ENCODE measurements at regions of chr13 and their contacts with region 1.

Region 1: GRCh38 chr13:19959831-19960652 is 1.5 kb downstream of the ZMYM2 start:
- DNase-seq: peak; percentile 93
- H3K4me3 Mint-ChIP-seq: peak overlapping the region; percentile 94
- H3K27ac Mint-ChIP-seq: peak overlapping the region; percentile 96
- H3K4me1 Mint-ChIP-seq: peaks cover 34% of the 10 kb centered on the region
- H3K27me3 Mint-ChIP-seq: no peaks in the 10 kb centered on the region

Region 2: GRCh38 chr13:19153782-19154450 is 806.1 kb before region 1 on chr13:
- CTCF ChIA-PET with region 1: no interaction called
- POLR2A ChIA-PET with region 1: no interaction called
- intact Hi-C with region 1: no loop called
- DNase-seq: peak; percentile 33
- H3K4me3 Mint-ChIP-seq: no peak overlapping the region
- H3K27ac Mint-ChIP-seq: no peak overlapping the region
- H3K4me1 Mint-ChIP-seq: no peaks in the 10 kb centered on the region
- H3K27me3 Mint-ChIP-seq: no peaks in the 10 kb centered on the region

Region 3: GRCh38 chr13:19633479-19634255 is 326.4 kb before region 1 on chr13 and contains the start of gene MPHOSPH8:
- CTCF ChIA-PET with region 1: no interaction called
- POLR2A ChIA-PET with region 1: no interaction called
- intact Hi-C with region 1: loop called (anchors 1 kb)
- DNase-seq: peak; percentile 96
- H3K4me3 Mint-ChIP-seq: peak within 1 kb of the TSS; percentile 100
- H3K27ac Mint-ChIP-seq: peak within 1 kb of the TSS; percentile 98
- H3K4me1 Mint-ChIP-seq: peaks cover 25% of the 10 kb centered on the region
- H3K27me3 Mint-ChIP-seq: peaks cover 2% of the 10 kb centered on the region
- total RNA-seq, gene MPHOSPH8: 32.6 to 37.6 TPM

Region 4: DNA sequence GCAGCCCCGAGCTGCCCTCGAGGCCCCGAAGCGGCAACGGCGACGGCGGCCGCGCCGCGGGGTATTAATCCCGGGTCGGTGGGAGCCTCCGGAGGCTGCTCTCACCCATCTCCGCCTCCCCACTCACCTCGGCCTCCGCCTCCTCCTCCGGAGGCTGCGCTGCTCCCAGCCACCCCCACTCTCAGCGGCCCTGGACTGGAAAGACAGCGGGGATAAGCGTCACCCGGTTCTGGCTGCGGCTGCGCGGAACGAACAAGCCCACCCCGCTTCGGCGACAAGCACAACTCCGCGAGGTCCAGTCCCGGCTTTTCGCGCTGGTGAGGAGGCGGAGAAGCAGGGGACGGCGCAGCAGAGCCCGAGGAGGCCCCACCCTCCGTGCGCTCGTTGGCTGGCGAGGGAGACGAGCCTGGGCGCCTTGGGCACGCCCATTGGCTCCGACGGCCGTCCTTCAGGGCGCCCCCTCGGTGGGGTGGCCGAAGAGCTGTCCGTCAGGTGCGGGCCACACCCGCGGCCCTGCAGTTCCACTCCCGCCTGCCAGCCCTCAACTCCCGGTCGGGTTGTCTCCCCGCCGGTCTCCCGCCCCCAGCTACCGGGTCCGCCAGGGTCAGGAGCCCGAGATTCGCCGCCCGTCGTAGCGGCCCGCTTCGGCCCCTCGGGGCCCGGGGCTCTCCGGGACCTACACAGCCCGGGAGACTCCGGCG is 96.6 kb before region 1 on chr13 and contains the start of gene ZMYM5:
- CTCF ChIA-PET with region 1: interaction called, 7 read pairs
- POLR2A ChIA-PET with region 1: interaction called, 7 read pairs
- intact Hi-C with region 1: loop called (anchors 1 kb)
- DNase-seq: peak; percentile 98
- H3K4me3 Mint-ChIP-seq: peak within 1 kb of the TSS; percentile 95
- H3K27ac Mint-ChIP-seq: peak within 1 kb of the TSS; percentile 97
- H3K4me1 Mint-ChIP-seq: peaks cover 43% of the 10 kb centered on the region
- H3K27me3 Mint-ChIP-seq: no peaks in the 10 kb centered on the region
- total RNA-seq, gene ZMYM5: 10.0 to 11.1 TPM

Region 5: GRCh38 chr13:19888799-19889198 is 71.2 kb before region 1 on chr13:
- CTCF ChIA-PET with region 1: no interaction called
- POLR2A ChIA-PET with region 1: no interaction called
- intact Hi-C with region 1: no loop called
- DNase-seq: no peak
- H3K4me3 Mint-ChIP-seq: no peak overlapping the region
- H3K27ac Mint-ChIP-seq: no peak overlapping the region
- H3K4me1 Mint-ChIP-seq: no peaks in the 10 kb centered on the region
- H3K27me3 Mint-ChIP-seq: no peaks in the 10 kb centered on the region

Region 6: GRCh38 chr13:20002787-20003186 is 42.7 kb after region 1 on chr13:
- CTCF ChIA-PET with region 1: no interaction called
- POLR2A ChIA-PET with region 1: no interaction called
- intact Hi-C with region 1: no loop called
- DNase-seq: no peak
- H3K4me3 Mint-ChIP-seq: no peak overlapping the region
- H3K27ac Mint-ChIP-seq: no peak overlapping the region
- H3K4me1 Mint-ChIP-seq: peaks cover 28% of the 10 kb centered on the region
- H3K27me3 Mint-ChIP-seq: no peaks in the 10 kb centered on the region

Region 7: GRCh38 chr13:20019043-20019442 is 59.0 kb after region 1 on chr13:
- CTCF ChIA-PET with region 1: interaction called, 3 read pairs
- POLR2A ChIA-PET with region 1: no interaction called
- intact Hi-C with region 1: loop called (anchors 5 kb)
- DNase-seq: no peak
- H3K4me3 Mint-ChIP-seq: no peak overlapping the region
- H3K27ac Mint-ChIP-seq: no peak overlapping the region
- H3K4me1 Mint-ChIP-seq: peaks cover 35% of the 10 kb centered on the region
- H3K27me3 Mint-ChIP-seq: no peaks in the 10 kb centered on the region

Region 8: DNA sequence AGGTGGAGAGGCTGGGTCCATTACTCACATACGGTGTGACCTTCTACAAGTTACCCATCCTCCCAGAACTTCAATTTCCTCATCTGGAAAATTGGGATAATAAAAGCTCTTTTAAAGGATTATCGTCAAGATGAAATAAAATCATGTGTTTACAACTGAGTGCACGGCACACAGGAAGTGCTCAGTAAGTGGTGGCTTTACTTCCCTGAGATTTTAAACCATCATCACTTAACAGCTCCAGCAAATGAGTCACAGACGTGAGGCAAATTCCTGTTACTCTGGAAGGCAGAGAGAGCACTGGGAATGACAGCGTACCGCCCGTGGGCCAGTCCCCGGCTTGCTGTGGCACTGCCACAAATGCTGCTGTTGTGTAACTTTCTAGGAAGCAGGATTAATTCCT is 1280.5 kb after region 1 on chr13:
- CTCF ChIA-PET with region 1: no interaction called
- POLR2A ChIA-PET with region 1: no interaction called
- intact Hi-C with region 1: no loop called
- DNase-seq: no peak
- H3K4me3 Mint-ChIP-seq: no peak overlapping the region
- H3K27ac Mint-ChIP-seq: no peak overlapping the region
- H3K4me1 Mint-ChIP-seq: peaks cover 11% of the 10 kb centered on the region
- H3K27me3 Mint-ChIP-seq: peaks cover 4% of the 10 kb centered on the region

Region 9: GRCh38 chr13:21603531-21604448 is 1643.7 kb after region 1 on chr13 and contains the start of gene MICU2:
- CTCF ChIA-PET with region 1: no interaction called
- POLR2A ChIA-PET with region 1: no interaction called
- intact Hi-C with region 1: loop called (anchors 5 kb)
- DNase-seq: peak; percentile 97
- H3K4me3 Mint-ChIP-seq: peak within 1 kb of the TSS; percentile 81
- H3K27ac Mint-ChIP-seq: peak within 1 kb of the TSS; percentile 89
- H3K4me1 Mint-ChIP-seq: peaks cover 26% of the 10 kb centered on the region
- H3K27me3 Mint-ChIP-seq: peaks cover 5% of the 10 kb centered on the region
- total RNA-seq, gene MICU2: 32.6 to 33.3 TPM

Measured in activated CD4-positive, alpha-beta memory T cell treated with anti-CD3 and anti-CD28 coated beads for 36 hours (primary cell).